A673 (cell line): ENCODE measurements at regions of chrX and their contacts with region 1.

Region 1: GRCh38 chrX:111098874-111099273 is 2.9 kb downstream of the PAK3 start:
- DNase-seq: peak; percentile 50
- H3K4me3 ChIP-seq: no peak overlapping the region
- H3K27ac ChIP-seq: no peak overlapping the region
- H3K4me1 ChIP-seq: no peaks in the 10 kb centered on the region
- H3K27me3 ChIP-seq: peaks cover 15% of the 10 kb centered on the region
- CTCF ChIP-seq: peak; percentile 77

Region 2: DNA sequence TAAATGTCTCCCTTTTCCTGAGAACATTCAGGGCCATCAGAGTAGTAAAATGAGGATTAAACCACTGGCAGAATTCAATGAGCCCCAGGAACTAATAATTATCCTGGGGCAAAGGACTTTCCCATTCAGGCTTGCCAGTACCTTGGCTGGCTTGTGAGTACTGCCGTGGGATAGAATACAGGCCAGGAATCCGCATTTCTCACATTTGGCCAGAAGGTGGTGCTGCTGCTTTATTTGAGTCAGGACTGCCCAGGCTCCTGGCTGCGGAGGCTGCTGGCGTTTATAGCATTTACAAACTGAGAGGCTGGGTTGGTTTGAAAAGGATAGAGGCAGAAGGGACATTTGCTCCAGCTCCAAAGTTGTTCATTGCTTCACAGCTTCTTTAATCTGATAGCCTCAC is 648.8 kb before region 1 on chrX:
- CTCF ChIA-PET with region 1: no interaction called
- POLR2A ChIA-PET with region 1: no interaction called
- intact Hi-C with region 1: loop called (anchors 5 kb)
- DNase-seq: peak; percentile 84
- H3K4me3 ChIP-seq: no peak overlapping the region
- H3K27ac ChIP-seq: no peak overlapping the region
- H3K4me1 ChIP-seq: no peaks in the 10 kb centered on the region
- H3K27me3 ChIP-seq: peaks cover under 1% of the 10 kb centered on the region
- CTCF ChIP-seq: peak; percentile 80

Region 3: GRCh38 chrX:110853610-110854009 is 245.3 kb before region 1 on chrX:
- CTCF ChIA-PET with region 1: interaction called, 9 read pairs
- POLR2A ChIA-PET with region 1: no interaction called
- intact Hi-C with region 1: loop called (anchors 2 kb)
- DNase-seq: peak; percentile 52
- H3K4me3 ChIP-seq: no peak overlapping the region
- H3K27ac ChIP-seq: no peak overlapping the region
- H3K4me1 ChIP-seq: no peaks in the 10 kb centered on the region
- H3K27me3 ChIP-seq: peaks cover 6% of the 10 kb centered on the region
- CTCF ChIP-seq: peak; percentile 46

Region 4: DNA sequence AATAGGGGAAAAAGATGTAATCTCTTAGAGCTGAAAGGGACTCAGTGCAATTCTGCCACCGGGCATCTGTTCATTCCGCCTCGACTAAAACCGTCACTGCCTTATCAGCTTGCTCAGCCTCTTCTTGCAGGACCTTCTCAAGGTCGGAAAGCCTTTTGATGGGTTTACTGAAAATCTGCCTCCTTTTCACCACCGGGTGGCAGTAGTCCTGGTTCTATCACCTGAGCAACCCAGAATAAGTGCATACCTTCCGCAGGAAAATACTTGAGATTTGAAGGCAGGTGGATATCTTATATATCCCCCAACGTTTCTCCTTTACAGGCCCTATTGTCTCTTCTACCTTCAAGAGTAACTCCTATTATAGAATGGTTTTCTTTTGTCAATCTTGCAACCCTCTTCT is 106.3 kb before region 1 on chrX:
- CTCF ChIA-PET with region 1: interaction called, 3 read pairs
- POLR2A ChIA-PET with region 1: no interaction called
- intact Hi-C with region 1: loop called (anchors 1 kb)
- DNase-seq: peak; percentile 19
- H3K4me3 ChIP-seq: no peak overlapping the region
- H3K27ac ChIP-seq: no peak overlapping the region
- H3K4me1 ChIP-seq: no peaks in the 10 kb centered on the region
- H3K27me3 ChIP-seq: peaks cover 19% of the 10 kb centered on the region
- CTCF ChIP-seq: peak; percentile 66